ENCODE measurements at regions of chr17 and their contacts with region 1.

Region 1: GRCh38 chr17:7289256-7290032 is 5.0 kb downstream of the YBX2 start:
- DNase-seq: no peak
- ATAC-seq: no peak
- H3K4me3 ChIP-seq: no peak overlapping the region
- H3K27ac ChIP-seq: no peak overlapping the region
- H3K4me1 ChIP-seq: peaks cover 9% of the 10 kb centered on the region
- H3K27me3 ChIP-seq: no peaks in the 10 kb centered on the region
- CTCF ChIP-seq: no peak
- POLR2A ChIP-seq: no peak

Region 2: DNA sequence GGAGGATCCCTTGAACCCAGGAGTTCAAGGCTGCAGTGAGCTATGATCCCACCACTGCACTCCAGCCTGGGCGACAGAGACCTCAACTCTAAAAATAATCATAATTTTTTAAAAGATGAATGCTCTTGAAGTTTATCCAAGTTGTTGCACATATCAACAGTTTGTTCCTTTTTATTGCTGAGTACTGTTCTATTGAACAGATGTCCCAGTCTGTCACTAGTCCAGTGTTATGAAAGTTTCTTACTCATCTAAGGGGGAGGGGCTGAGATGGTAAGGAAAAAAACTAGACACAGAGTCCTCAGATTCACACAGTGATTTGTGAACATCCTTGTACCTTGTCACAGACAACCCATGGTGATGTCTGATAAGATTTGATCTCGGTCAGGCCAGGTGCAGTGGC is 50.7 kb after region 1 on chr17:
- intact Hi-C with region 1: loop called (anchors 5 kb)
- DNase-seq: no peak
- ATAC-seq: no peak
- H3K4me3 ChIP-seq: no peak overlapping the region
- H3K27ac ChIP-seq: no peak overlapping the region
- H3K4me1 ChIP-seq: no peaks in the 10 kb centered on the region
- H3K27me3 ChIP-seq: peaks cover 0 to 25% of the 10 kb centered on the region in 2 donors
- CTCF ChIP-seq: no peak
- POLR2A ChIP-seq: no peak